ENCODE measurements at regions of chr9 and their contacts with region 1.

Region 1: GRCh38 chr9:16396389-16396788 is 474.1 kb downstream of the BNC2 start:
- DNase-seq: no peak
- ATAC-seq: no peak
- H3K4me3 ChIP-seq: no peak overlapping the region
- H3K27ac ChIP-seq: no peak overlapping the region
- H3K4me1 ChIP-seq: peaks cover 0 to 5% (median 0%) of the 10 kb centered on the region in 9 donors
- H3K27me3 ChIP-seq: no peaks in the 10 kb centered on the region
- CTCF ChIP-seq: no peak

Region 2: GRCh38 chr9:16335788-16336580 is 60.4 kb before region 1 on chr9:
- intact Hi-C with region 1: loop called in 1 of 10 experiments (anchors 10 kb)
- DNase-seq: peak; percentile 38 to 44
- ATAC-seq: peak; percentile 50 to 95 (median 61)
- H3K4me3 ChIP-seq: no peak overlapping the region
- H3K27ac ChIP-seq: peak overlapping the region in 6 of 10 donors; percentile 1 to 84 (median 28)
- H3K4me1 ChIP-seq: peaks cover 0 to 27% (median 0%) of the 10 kb centered on the region in 9 donors
- H3K27me3 ChIP-seq: no peaks in the 10 kb centered on the region
- CTCF ChIP-seq: no peak

Measured in heart right ventricle (tissue), 16 donors.